ENCODE measurements at regions of chr6 and their contacts with region 1.

Region 1: GRCh38 chr6:150905769-150906506 is 40.4 kb downstream of the MTHFD1L start:
- DNase-seq: no peak
- ATAC-seq: no peak
- H3K4me3 ChIP-seq: no peak overlapping the region
- H3K27ac ChIP-seq: no peak overlapping the region
- H3K4me1 ChIP-seq: no peaks in the 10 kb centered on the region
- H3K27me3 ChIP-seq: no peaks in the 10 kb centered on the region
- CTCF ChIP-seq: peak; percentile 71

Region 2: GRCh38 chr6:150767571-150768018 is 138.3 kb before region 1 on chr6:
- CTCF ChIA-PET with region 1: no interaction called
- POLR2A ChIA-PET with region 1: no interaction called
- in situ Hi-C with region 1: no loop called
- intact Hi-C with region 1: no loop called
- DNase-seq: no peak
- ATAC-seq: no peak
- H3K4me3 ChIP-seq: no peak overlapping the region
- H3K27ac ChIP-seq: no peak overlapping the region
- H3K4me1 ChIP-seq: no peaks in the 10 kb centered on the region
- H3K27me3 ChIP-seq: peaks cover 3% of the 10 kb centered on the region; the same call in 1 of the 2 replicates
- CTCF ChIP-seq: no peak

Region 3: GRCh38 chr6:151112130-151112529 is 206.2 kb after region 1 on chr6:
- CTCF ChIA-PET with region 1: no interaction called
- POLR2A ChIA-PET with region 1: no interaction called
- in situ Hi-C with region 1: no loop called
- intact Hi-C with region 1: no loop called
- DNase-seq: no peak
- ATAC-seq: no peak
- H3K4me3 ChIP-seq: no peak overlapping the region
- H3K27ac ChIP-seq: no peak overlapping the region
- H3K4me1 ChIP-seq: no peaks in the 10 kb centered on the region; the same call in 1 of the 2 replicates
- H3K27me3 ChIP-seq: no peaks in the 10 kb centered on the region
- CTCF ChIP-seq: no peak

Region 4: GRCh38 chr6:151422981-151423380 is 517.0 kb after region 1 on chr6:
- CTCF ChIA-PET with region 1: no interaction called
- POLR2A ChIA-PET with region 1: interaction called, 10 read pairs
- in situ Hi-C with region 1: no loop called
- intact Hi-C with region 1: no loop called
- DNase-seq: no peak
- ATAC-seq: no peak
- H3K4me3 ChIP-seq: no peak overlapping the region
- H3K27ac ChIP-seq: no peak overlapping the region
- H3K4me1 ChIP-seq: no peaks in the 10 kb centered on the region
- H3K27me3 ChIP-seq: no peaks in the 10 kb centered on the region
- CTCF ChIP-seq: no peak

Measured in Panc1 (cell line).